CD8-positive, alpha-beta T cell (primary cell): ENCODE measurements at regions of chr16 and their contacts with region 1.

Region 1: DNA sequence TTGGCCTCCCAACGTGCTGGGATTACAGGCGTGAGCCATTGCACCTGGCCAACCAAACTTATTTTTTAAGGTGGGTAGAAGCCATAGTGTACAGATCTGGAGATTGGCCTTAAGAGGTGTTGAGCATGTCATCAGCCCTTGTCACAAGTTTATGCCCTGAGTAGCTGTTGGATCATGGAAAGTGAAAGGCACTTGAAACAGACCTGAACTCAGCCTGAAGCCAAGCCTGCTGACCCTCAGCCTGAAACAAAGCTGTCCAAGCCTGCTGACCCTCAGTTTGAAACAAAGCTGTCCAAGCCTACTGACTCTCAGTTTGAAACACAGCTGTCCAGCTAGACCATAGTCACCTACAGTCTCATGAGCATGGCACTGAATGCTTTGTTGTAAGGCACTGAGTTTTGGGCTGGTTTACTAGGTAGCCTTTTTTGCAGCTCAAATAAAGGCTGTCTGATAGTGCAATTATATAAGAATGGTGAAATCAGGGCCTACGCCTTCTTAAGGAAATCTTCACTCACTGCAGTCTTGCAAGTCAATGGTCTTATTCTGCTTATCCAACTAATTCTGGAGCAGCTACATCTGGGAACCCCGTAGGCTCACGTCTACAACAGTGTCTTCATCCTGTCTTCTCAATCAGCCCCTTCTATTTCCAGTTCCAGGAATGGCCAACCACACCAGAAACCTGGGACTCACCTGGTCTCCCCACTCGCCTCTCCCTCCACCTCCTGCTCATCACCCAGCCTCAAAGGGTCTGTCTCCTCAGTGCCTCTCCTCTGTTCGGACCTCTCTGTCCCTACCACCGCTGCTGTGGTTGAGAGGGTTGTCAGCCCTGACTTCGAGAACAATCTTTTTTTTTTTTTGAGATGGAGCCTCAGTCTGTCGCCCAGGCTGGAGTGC is 2.9 kb upstream of the NPIPB15 start:
- DNase-seq: no peak
- ATAC-seq: no peak
- H3K4me3 ChIP-seq: no peak overlapping the region
- H3K4me3 Mint-ChIP-seq: no peak overlapping the region
- H3K27ac ChIP-seq: no peak overlapping the region
- H3K27ac Mint-ChIP-seq: no peak overlapping the region
- H3K4me1 ChIP-seq: no peaks in the 10 kb centered on the region
- H3K4me1 Mint-ChIP-seq: peaks cover 2% of the 10 kb centered on the region
- H3K27me3 ChIP-seq: no peaks in the 10 kb centered on the region
- H3K27me3 Mint-ChIP-seq: no peaks in the 10 kb centered on the region
- CTCF ChIP-seq: no peak

Region 2: DNA sequence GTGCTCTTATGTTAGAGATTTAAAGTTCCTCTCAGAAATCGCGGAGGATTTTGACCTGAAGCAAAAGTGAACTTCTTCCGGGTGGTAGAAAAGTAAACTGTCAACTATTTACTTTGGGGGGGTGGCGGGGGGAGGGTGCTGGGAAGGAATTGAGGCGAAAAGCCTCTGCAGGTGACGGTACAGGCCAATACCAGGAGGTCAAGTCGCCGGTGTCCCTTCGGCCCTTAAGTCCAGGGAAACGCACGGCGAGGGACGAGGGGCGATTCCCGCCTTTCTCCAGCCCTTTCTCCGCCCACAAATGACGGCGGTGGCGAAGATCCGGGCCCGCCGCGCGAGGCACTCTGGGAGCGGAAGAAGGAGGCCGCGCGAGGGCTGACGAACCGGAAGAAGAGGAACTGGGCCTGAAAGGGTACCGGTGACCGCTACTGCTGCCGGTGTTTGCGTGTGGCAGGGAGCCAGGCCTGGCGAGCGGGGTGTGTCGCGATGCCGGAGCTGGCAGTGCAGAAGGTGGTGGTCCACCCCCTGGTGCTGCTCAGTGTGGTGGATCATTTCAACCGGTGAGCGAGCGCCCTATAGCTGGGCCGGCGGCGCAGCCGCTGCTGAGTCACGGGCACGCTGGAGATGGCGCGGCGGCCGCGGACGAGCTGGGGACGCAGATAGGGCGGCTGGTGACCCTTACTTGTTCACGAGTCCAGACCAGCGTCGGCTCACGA is 76.6 kb before region 1 on chr16 and contains the start of gene PSMD7:
- CTCF ChIA-PET with region 1: no interaction called
- POLR2A ChIA-PET with region 1: no interaction called
- intact Hi-C with region 1: loop called in 1 of 2 experiments (anchors 1 kb)
- DNase-seq: peak; percentile 77 to 93 (median 89)
- ATAC-seq: peak; percentile 86
- H3K4me3 ChIP-seq: peak within 1 kb of the TSS; percentile 83 to 95
- H3K4me3 Mint-ChIP-seq: peak within 1 kb of the TSS; percentile 95
- H3K27ac ChIP-seq: peak within 1 kb of the TSS; percentile 87 to 97
- H3K27ac Mint-ChIP-seq: peak within 1 kb of the TSS; percentile 99
- H3K4me1 ChIP-seq: peaks cover 25% of the 10 kb centered on the region
- H3K4me1 Mint-ChIP-seq: peaks cover 47% of the 10 kb centered on the region
- H3K27me3 ChIP-seq: no peaks in the 10 kb centered on the region
- H3K27me3 Mint-ChIP-seq: no peaks in the 10 kb centered on the region
- CTCF ChIP-seq: no peak
- total RNA-seq, gene PSMD7: 136 to 137 TPM

Region 3: DNA sequence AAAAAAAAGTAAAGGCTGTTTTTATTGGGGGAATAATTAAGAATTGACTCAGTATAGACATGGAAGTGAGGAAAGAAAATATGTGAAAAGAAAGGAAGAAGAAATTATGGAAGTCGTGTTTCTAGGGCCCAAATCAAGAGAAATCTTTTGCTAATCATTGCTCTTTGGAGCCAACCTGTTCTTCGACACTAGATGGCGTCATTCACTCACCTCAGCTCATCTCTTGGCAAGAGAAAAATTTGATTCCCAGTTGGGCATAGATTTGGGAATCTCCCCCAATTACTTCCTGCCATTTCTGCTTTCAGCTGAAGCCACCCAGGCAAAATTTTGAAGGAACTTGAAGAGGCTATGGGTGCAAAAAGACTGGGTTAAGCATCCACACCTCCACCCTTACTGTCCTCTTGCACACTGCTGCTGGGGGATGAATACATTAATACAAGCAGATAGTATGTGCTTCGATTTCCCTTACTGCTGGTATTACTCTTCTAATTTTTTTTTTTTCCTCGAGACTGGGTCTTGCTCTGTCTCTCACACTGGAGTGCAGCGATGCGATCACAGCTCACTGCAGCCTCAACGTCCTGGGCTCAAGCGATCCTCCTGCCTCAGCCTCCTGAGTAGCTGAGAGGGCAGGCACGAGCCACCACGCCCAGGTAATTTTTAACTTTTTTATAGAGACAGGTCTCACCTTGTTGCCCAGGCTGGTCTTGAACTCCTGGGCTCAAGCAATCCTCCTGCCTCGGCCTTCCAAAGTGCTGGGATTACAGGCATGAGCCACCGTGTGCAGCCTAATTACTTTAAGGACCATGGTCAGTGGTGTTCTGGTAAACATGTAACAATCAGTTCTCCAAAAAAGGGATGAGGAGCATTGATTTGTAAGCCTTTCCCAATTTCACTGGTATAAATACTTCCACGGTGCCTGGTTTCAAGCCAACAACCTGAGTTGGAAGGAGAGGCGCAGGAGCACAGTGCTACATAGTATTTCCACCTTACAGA is 63.1 kb before region 1 on chr16:
- CTCF ChIA-PET with region 1: no interaction called
- POLR2A ChIA-PET with region 1: no interaction called
- intact Hi-C with region 1: no loop called
- DNase-seq: peak in 2 of 9 experiments; percentile 48 to 62
- ATAC-seq: no peak
- H3K4me3 ChIP-seq: no peak overlapping the region
- H3K4me3 Mint-ChIP-seq: no peak overlapping the region
- H3K27ac ChIP-seq: no peak overlapping the region
- H3K27ac Mint-ChIP-seq: no peak overlapping the region
- H3K4me1 ChIP-seq: no peaks in the 10 kb centered on the region
- H3K4me1 Mint-ChIP-seq: no peaks in the 10 kb centered on the region
- H3K27me3 ChIP-seq: no peaks in the 10 kb centered on the region
- H3K27me3 Mint-ChIP-seq: no peaks in the 10 kb centered on the region
- CTCF ChIP-seq: peak; percentile 63

Region 4: GRCh38 chr16:74466872-74467271 is 93.7 kb after region 1 on chr16:
- CTCF ChIA-PET with region 1: no interaction called
- POLR2A ChIA-PET with region 1: no interaction called
- intact Hi-C with region 1: no loop called
- DNase-seq: no peak
- ATAC-seq: peak; percentile 55
- H3K4me3 ChIP-seq: no peak overlapping the region
- H3K4me3 Mint-ChIP-seq: no peak overlapping the region
- H3K27ac ChIP-seq: peak overlapping the region in 1 of 2 experiments; percentile 8
- H3K27ac Mint-ChIP-seq: peak overlapping the region; percentile 79
- H3K4me1 ChIP-seq: peaks cover 4% of the 10 kb centered on the region
- H3K4me1 Mint-ChIP-seq: peaks cover 16% of the 10 kb centered on the region
- H3K27me3 ChIP-seq: no peaks in the 10 kb centered on the region
- H3K27me3 Mint-ChIP-seq: no peaks in the 10 kb centered on the region
- CTCF ChIP-seq: no peak

Region 5: GRCh38 chr16:75152635-75153034 is 779.4 kb after region 1 on chr16:
- CTCF ChIA-PET with region 1: no interaction called
- POLR2A ChIA-PET with region 1: no interaction called
- intact Hi-C with region 1: no loop called
- DNase-seq: no peak
- ATAC-seq: no peak
- H3K4me3 ChIP-seq: no peak overlapping the region
- H3K4me3 Mint-ChIP-seq: no peak overlapping the region
- H3K27ac ChIP-seq: no peak overlapping the region
- H3K27ac Mint-ChIP-seq: no peak overlapping the region
- H3K4me1 ChIP-seq: peaks cover 12% of the 10 kb centered on the region
- H3K4me1 Mint-ChIP-seq: peaks cover 24% of the 10 kb centered on the region
- H3K27me3 ChIP-seq: no peaks in the 10 kb centered on the region
- H3K27me3 Mint-ChIP-seq: no peaks in the 10 kb centered on the region
- CTCF ChIP-seq: no peak